ENCODE measurements at regions of chr11 and their contacts with region 1.

Region 1: DNA sequence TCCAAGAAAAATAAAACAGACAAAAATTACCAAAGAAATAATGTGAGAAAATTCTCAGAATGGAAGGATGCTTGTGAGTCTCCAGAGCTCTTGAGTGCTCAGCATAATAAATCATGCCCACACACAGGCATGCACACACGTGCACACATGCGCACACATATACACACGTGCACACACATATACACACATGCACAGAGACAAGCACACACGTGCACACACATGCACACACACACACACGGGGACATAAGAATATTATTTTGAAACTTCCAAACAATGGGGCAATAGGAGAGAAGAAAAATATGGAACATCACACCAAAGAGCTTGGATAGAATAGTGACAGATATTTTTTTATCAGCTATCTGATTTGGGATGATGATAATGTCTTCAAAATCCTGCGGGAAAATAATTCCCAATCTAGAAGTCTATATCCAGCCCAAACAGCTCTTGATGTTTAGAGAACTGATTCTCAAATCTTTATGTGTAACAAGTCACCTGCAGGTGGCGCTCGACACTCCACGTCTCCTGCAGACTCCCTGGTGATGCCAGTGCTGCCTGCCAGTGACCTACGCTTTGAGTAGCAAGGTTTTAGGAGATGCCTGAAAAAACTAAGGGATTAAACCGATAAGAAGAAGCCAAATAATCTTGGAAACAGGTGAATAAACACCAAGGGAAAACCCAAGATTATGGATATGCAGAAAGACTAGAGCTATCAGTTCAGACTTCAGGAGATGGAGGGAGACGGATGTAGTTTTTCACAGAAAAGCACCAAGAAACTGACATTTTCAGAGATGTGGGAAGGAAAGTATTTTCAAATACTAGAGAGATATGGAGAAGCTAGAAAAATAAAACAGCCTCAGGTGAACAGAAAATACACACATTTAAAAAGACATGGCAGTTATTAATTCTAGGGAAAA is 743.6 kb downstream of the ETS1 start:
- DNase-seq: peak in 1 of 2 experiments; percentile 69
- H3K4me3 ChIP-seq: no peak overlapping the region
- H3K27ac ChIP-seq: no peak overlapping the region
- H3K4me1 ChIP-seq: no peaks in the 10 kb centered on the region
- H3K27me3 ChIP-seq: peaks cover 5% of the 10 kb centered on the region; the same call in 1 of the 2 replicates
- CTCF ChIP-seq: peak; percentile 74

Region 2: GRCh38 chr11:126585781-126586491 is 1257.8 kb before region 1 on chr11:
- CTCF ChIA-PET with region 1: no interaction called
- POLR2A ChIA-PET with region 1: no interaction called
- intact Hi-C with region 1: no loop called
- DNase-seq: peak; percentile 45 to 62
- H3K4me3 ChIP-seq: no peak overlapping the region
- H3K27ac ChIP-seq: no peak overlapping the region
- H3K4me1 ChIP-seq: no peaks in the 10 kb centered on the region
- H3K27me3 ChIP-seq: peaks cover 92% of the 10 kb centered on the region
- CTCF ChIP-seq: no peak

Region 3: GRCh38 chr11:128021349-128022006 is 177.7 kb after region 1 on chr11:
- CTCF ChIA-PET with region 1: interaction called, 3 read pairs
- POLR2A ChIA-PET with region 1: no interaction called
- intact Hi-C with region 1: loop called (anchors 5 kb)
- DNase-seq: peak in 1 of 2 experiments; percentile 4
- H3K4me3 ChIP-seq: no peak overlapping the region
- H3K27ac ChIP-seq: no peak overlapping the region
- H3K4me1 ChIP-seq: peaks cover 4% of the 10 kb centered on the region; the same call in 1 of the 2 replicates
- H3K27me3 ChIP-seq: peaks cover 18% of the 10 kb centered on the region
- CTCF ChIP-seq: 0 out of 2 replicates have a peak, but pooled peaks have one; percentile 15

Region 4: DNA sequence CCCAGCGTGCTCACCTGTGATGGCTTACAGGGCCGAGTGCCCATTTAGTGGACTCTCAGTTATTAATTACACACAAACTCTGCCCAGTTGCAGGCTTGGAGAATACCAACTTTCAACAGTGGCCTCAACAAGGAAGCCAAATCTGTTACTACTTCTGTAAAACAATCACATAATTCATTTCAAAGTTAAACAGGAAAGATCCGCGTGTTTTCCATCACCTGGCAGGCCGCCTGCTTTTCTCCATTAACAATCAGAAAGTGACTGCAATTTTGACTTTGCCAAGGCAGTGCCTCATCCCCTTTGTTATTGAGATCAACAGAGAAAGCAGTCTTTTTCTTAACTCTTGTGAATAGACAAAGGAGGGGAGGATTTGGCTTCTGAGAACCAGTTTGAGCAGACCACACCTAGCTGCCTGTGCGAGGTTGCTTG is 1609.6 kb after region 1 on chr11:
- CTCF ChIA-PET with region 1: no interaction called
- POLR2A ChIA-PET with region 1: no interaction called
- intact Hi-C with region 1: no loop called
- DNase-seq: no peak
- H3K4me3 ChIP-seq: no peak overlapping the region
- H3K27ac ChIP-seq: no peak overlapping the region
- H3K4me1 ChIP-seq: peaks cover 13% of the 10 kb centered on the region
- H3K27me3 ChIP-seq: no peaks in the 10 kb centered on the region
- CTCF ChIP-seq: no peak

Measured in PC-9 (cell line).